ENCODE measurements at regions of chr2 and their contacts with region 1.

Region 1: GRCh38 chr2:42128721-42129486 is 40.2 kb upstream of the EML4 start:
- DNase-seq: peak; percentile 75
- H3K4me3 ChIP-seq: no peak overlapping the region
- H3K27ac ChIP-seq: no peak overlapping the region
- H3K4me1 ChIP-seq: peaks cover 61% of the 10 kb centered on the region
- H3K27me3 ChIP-seq: no peaks in the 10 kb centered on the region
- CTCF ChIP-seq: no peak

Region 2: DNA sequence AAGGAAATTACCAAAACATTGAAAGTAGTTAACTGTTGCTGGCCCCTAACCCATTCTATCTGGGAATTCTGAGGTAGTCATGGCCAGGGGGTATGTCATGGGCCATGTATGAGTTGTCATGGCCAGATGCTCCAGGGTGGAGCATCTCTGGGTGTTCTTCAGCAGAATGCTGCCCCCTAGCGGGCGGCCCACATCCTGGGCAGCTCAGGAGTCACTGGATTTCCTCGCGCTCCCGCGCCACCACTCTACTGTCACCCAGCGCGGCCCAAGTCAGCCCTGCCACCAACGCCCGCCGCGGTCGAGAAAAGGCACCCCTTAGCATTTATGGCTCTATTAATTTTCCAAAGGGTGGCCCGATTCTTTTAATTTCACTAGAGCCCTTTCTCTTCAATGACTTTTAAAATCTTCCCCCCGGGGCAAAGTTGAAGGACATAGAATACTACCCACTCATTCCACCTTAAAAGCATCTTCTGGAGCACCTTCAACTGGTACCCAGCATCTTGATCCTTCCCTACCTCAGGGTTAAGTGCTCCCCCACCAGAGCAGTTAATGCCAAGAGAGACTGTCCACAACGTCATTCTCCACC is 39.5 kb before region 1 on chr2:
- CTCF ChIA-PET with region 1: no interaction called
- dilution Hi-C with region 1: no loop called
- in situ Hi-C with region 1: no loop called
- intact Hi-C with region 1: no loop called
- DNase-seq: peak; percentile 22
- H3K4me3 ChIP-seq: no peak overlapping the region
- H3K27ac ChIP-seq: no peak overlapping the region
- H3K4me1 ChIP-seq: peaks cover 8% of the 10 kb centered on the region
- H3K27me3 ChIP-seq: no peaks in the 10 kb centered on the region
- CTCF ChIP-seq: peak; percentile 61 to 79

Region 3: GRCh38 chr2:42141687-42142546 is 13.0 kb after region 1 on chr2:
- CTCF ChIA-PET with region 1: no interaction called
- dilution Hi-C with region 1: no loop called
- in situ Hi-C with region 1: no loop called
- intact Hi-C with region 1: loop called (anchors 1 kb)
- DNase-seq: peak; percentile 33
- H3K4me3 ChIP-seq: peak overlapping the region in 2 of 3 experiments; percentile 4 to 25
- H3K27ac ChIP-seq: no peak overlapping the region
- H3K4me1 ChIP-seq: peaks cover 32% of the 10 kb centered on the region
- H3K27me3 ChIP-seq: no peaks in the 10 kb centered on the region
- CTCF ChIP-seq: no peak

Measured in mammary epithelial cell (primary cell).